Panc1 (cell line): ENCODE measurements at regions of chr2 and their contacts with region 1.

Region 1: GRCh38 chr2:142980561-142981378 is 103.3 kb downstream of the KYNU start:
- DNase-seq: no peak
- ATAC-seq: no peak
- H3K4me3 ChIP-seq: no peak overlapping the region
- H3K27ac ChIP-seq: no peak overlapping the region
- H3K4me1 ChIP-seq: no peaks in the 10 kb centered on the region
- H3K27me3 ChIP-seq: no peaks in the 10 kb centered on the region
- CTCF ChIP-seq: peak; percentile 58; the same call in 1 of the 2 replicates

Region 2: DNA sequence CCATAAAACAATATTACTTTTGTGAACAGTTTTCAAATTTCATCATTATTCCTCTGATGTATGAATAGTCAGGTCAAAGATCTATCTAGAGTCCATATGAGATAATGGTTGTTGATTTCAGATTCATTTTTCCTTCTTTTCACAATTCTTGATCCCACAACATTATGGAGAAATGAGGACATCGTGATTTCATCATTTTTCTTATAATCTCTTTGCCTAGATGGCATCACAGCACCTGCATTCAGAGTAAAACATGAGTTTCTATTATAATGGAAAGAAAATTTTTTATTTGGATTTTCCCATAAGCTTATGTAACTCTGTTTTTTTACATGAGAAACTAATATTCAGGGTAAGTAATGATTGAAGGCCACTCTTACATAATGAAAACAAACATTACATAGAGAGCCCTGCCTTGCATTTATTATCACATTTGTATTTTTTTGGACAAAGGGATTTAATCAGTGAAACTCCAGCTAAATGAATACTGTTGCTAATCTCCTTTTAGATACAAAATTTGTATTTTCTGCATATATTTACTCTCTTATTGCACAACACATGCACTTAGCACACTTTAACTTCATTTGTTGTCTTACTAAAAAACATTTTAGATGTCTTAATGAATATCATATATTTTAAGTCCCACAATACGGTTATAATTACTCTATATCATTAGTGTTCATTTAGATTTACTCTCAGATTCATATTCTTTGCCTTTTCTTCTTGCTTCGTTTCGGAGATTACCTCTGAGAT is 291.7 kb before region 1 on chr2:
- CTCF ChIA-PET with region 1: no interaction called
- POLR2A ChIA-PET with region 1: no interaction called
- in situ Hi-C with region 1: no loop called
- intact Hi-C with region 1: loop called (anchors 5 kb)
- DNase-seq: no peak
- ATAC-seq: no peak
- H3K4me3 ChIP-seq: no peak overlapping the region
- H3K27ac ChIP-seq: no peak overlapping the region
- H3K4me1 ChIP-seq: no peaks in the 10 kb centered on the region
- H3K27me3 ChIP-seq: no peaks in the 10 kb centered on the region
- CTCF ChIP-seq: no peak

Region 3: GRCh38 chr2:142742371-142743214 is 238.2 kb before region 1 on chr2:
- CTCF ChIA-PET with region 1: no interaction called
- POLR2A ChIA-PET with region 1: no interaction called
- in situ Hi-C with region 1: no loop called
- intact Hi-C with region 1: no loop called
- DNase-seq: no peak
- ATAC-seq: no peak
- H3K4me3 ChIP-seq: no peak overlapping the region
- H3K27ac ChIP-seq: no peak overlapping the region
- H3K4me1 ChIP-seq: no peaks in the 10 kb centered on the region
- H3K27me3 ChIP-seq: no peaks in the 10 kb centered on the region
- CTCF ChIP-seq: no peak

Region 4: GRCh38 chr2:143001501-143001900 is 20.7 kb after region 1 on chr2:
- CTCF ChIA-PET with region 1: no interaction called
- POLR2A ChIA-PET with region 1: no interaction called
- in situ Hi-C with region 1: no loop called
- intact Hi-C with region 1: no loop called
- DNase-seq: no peak
- ATAC-seq: no peak
- H3K4me3 ChIP-seq: no peak overlapping the region
- H3K27ac ChIP-seq: no peak overlapping the region
- H3K4me1 ChIP-seq: no peaks in the 10 kb centered on the region
- H3K27me3 ChIP-seq: no peaks in the 10 kb centered on the region
- CTCF ChIP-seq: no peak

Region 5: DNA sequence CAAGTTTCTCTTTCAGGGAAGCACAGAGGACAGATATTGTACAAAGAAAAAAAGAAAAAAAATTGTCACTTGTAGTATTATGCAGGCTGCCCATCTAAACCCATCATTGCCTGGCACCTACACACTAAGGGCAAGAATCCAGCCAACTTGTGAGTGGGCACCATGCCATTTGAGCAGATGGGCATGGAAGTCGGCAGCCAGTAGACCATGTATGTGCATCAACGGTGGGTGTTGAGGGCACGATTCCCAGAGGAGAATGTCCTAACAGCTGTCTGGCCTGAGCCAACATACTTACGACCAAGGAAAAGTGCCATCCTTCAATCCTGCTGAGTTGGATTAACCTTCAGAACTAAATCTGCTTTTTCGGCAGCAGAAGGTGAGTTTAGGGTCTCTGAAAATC is 212.4 kb after region 1 on chr2:
- CTCF ChIA-PET with region 1: no interaction called
- POLR2A ChIA-PET with region 1: no interaction called
- in situ Hi-C with region 1: no loop called
- intact Hi-C with region 1: no loop called
- DNase-seq: no peak
- ATAC-seq: no peak
- H3K4me3 ChIP-seq: no peak overlapping the region
- H3K27ac ChIP-seq: no peak overlapping the region
- H3K4me1 ChIP-seq: no peaks in the 10 kb centered on the region
- H3K27me3 ChIP-seq: no peaks in the 10 kb centered on the region
- CTCF ChIP-seq: no peak